ENCODE measurements at regions of chr1 and their contacts with region 1.

Region 1: GRCh38 chr1:116724765-116725375 is 29.4 kb upstream of the CD2 start:
- DNase-seq: peak; percentile 69 to 79 (median 71)
- H3K4me3 ChIP-seq: no peak overlapping the region
- H3K27ac ChIP-seq: no peak overlapping the region
- H3K4me1 ChIP-seq: peaks cover 0 to 6% (median under 1%) of the 10 kb centered on the region in 4 experiments
- H3K27me3 ChIP-seq: no peaks in the 10 kb centered on the region

Region 2: GRCh38 chr1:116679091-116679827 is 45.6 kb before region 1 on chr1:
- CTCF ChIA-PET with region 1: no interaction called
- POLR2A ChIA-PET with region 1: no interaction called
- DNase-seq: peak; percentile 38 to 75 (median 58)
- H3K4me3 ChIP-seq: no peak overlapping the region
- H3K27ac ChIP-seq: no peak overlapping the region
- H3K4me1 ChIP-seq: peaks cover 0 to 2% (median 0%) of the 10 kb centered on the region in 4 experiments
- H3K27me3 ChIP-seq: peaks cover 0 to 4% (median 0%) of the 10 kb centered on the region in 5 experiments

Region 3: DNA sequence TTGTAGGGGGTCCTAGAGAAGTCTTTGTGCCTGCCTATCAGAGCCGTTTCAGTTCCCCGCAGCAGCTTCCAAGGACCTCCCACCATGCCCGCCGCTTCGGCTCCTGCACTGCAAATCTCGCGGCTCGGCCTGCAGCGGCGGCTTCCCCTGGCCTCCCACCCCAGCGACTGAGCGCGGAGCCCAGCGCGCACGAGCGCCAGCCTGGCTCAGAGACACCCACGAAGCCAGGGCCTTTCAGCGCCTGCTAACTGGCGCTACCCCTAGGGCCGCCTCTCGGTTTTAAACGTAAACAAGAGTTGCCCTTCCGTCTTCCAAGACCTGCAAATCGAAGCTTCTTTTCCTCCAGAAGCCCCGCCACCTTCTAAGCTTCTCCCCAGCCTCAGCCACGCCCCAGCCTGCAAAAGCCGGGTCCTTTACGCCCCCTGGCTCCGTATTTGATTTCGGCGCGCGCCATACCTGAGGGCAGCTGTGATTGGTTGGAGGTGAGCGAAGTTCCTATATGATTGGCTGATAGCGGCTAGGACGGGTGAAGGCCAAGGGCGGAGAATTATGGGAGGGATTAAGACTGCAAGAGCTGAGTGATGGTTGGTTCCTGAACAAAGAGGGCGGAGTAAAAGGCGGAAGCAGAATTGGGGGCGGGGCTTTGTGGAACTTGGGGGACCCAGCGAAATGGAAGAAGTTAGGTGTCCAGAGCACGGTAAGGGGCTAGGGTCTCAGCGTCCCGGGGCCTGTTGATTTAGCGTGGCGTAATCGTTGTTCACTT is 335.0 kb after region 1 on chr1 and contains the start of gene TTF2:
- CTCF ChIA-PET with region 1: interaction called, 13 read pairs
- POLR2A ChIA-PET with region 1: no interaction called
- DNase-seq: peak; percentile 99 to 100 (median 100)
- H3K4me3 ChIP-seq: peak within 1 kb of the TSS; percentile 68 to 97 (median 90)
- H3K27ac ChIP-seq: peak within 1 kb of the TSS; percentile 64 to 79
- H3K4me1 ChIP-seq: peaks cover 3 to 40% (median 19%) of the 10 kb centered on the region in 4 experiments
- H3K27me3 ChIP-seq: no peaks in the 10 kb centered on the region

Measured in common myeloid progenitor, CD34-positive (primary cell).